Esophagus squamous epithelium (tissue), 5 donors: ENCODE measurements at regions of chr6 and their contacts with region 1.

Region 1: GRCh38 chr6:129598244-129599187 is 111.5 kb downstream of the ARHGAP18 start:
- DNase-seq: no peak
- H3K4me3 ChIP-seq: no peak overlapping the region
- H3K27ac ChIP-seq: no peak overlapping the region
- H3K4me1 ChIP-seq: peaks cover 0 to 7% (median 0%) of the 10 kb centered on the region in 3 donors
- H3K27me3 ChIP-seq: no peaks in the 10 kb centered on the region
- CTCF ChIP-seq: peak; percentile 74 to 91 (median 79)
- POLR2A ChIP-seq: no peak

Region 2: GRCh38 chr6:129635396-129636130 is 37.0 kb after region 1 on chr6:
- intact Hi-C with region 1: no loop called
- DNase-seq: no peak
- H3K4me3 ChIP-seq: no peak overlapping the region
- H3K27ac ChIP-seq: no peak overlapping the region
- H3K4me1 ChIP-seq: no peaks in the 10 kb centered on the region
- H3K27me3 ChIP-seq: no peaks in the 10 kb centered on the region
- CTCF ChIP-seq: no peak
- POLR2A ChIP-seq: no peak

Region 3: DNA sequence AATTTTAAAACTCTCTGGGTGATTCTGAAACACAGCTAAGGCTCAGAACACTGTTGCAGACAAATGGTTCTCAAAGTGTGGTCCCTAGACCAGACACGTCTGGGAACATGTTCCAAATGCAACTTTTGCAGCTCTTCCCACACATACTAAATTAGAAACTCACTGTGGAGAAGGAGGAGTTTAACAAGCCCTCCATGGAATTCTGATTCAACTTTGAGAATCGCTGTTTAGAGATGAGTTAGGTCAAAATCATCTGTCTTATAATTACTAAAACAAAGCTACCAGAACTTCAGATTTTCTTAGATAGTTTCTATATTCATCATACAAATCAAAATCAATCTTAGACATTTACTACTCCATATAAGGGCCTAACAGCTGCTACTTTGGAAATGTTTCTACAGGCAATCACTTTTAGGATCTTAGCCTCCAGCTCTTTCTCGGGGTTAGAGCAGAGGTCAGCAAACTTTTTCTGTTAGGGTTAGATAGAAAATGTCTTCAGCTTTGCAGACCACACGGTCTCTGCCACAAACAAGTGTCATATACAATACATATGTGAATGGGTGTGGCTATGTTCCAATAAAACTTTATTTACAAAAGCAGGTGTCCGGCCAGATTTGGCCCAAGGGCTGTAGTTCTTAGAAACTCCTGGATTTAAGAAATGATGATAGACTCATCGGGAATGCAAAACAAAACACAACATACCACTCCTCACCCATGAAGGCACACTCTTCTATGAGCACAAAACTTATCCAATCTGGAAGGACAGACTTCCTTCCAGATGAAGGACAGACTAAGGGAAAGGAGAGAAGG is 161.5 kb after region 1 on chr6:
- intact Hi-C with region 1: no loop called
- DNase-seq: no peak
- H3K4me3 ChIP-seq: no peak overlapping the region
- H3K27ac ChIP-seq: no peak overlapping the region
- H3K4me1 ChIP-seq: peaks cover 0 to 5% (median 0%) of the 10 kb centered on the region in 3 donors
- H3K27me3 ChIP-seq: peaks cover 0 to 75% (median 0%) of the 10 kb centered on the region in 4 donors
- CTCF ChIP-seq: no peak
- POLR2A ChIP-seq: no peak

Region 4: DNA sequence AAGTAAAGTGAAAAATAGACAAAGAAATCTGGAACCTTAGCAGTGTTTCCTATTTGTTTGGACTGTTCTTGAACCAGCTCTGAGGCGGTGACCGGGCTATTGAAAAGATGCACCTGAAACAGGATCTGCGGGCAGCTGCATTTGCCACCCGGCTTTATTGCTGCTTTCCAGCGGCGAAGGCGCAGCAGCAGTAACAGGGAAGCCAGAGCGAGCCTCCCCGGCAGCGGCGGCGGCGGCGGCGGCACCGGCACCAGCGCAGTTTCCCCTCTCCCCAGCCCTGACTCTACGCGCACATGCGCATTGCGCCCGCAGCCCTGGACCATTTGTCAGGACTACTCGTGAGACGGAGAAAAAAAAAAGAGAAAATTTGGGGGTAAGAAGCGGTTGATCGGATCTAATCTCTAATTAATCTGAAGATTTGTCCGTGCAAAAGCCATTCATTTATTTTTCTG is 419.8 kb after region 1 on chr6 and contains the start of gene L3MBTL3:
- intact Hi-C with region 1: loop called (anchors 10 kb)
- DNase-seq: peak; percentile 43
- H3K4me3 ChIP-seq: peak within 1 kb of the TSS; percentile 62 to 92 (median 87)
- H3K27ac ChIP-seq: peak within 1 kb of the TSS; percentile 71 to 89 (median 84)
- H3K4me1 ChIP-seq: peaks cover 0 to 7% (median 0%) of the 10 kb centered on the region in 3 donors
- H3K27me3 ChIP-seq: no peaks in the 10 kb centered on the region
- CTCF ChIP-seq: peak in 2 of 6 experiments; percentile 5 to 20
- POLR2A ChIP-seq: peak in 1 of 4 donors; percentile 35
- total RNA-seq, gene L3MBTL3: 1.2 to 5.3 (median 3.3) TPM